SK-N-SH (cell line): ENCODE measurements at regions of chr2 and their contacts with region 1.

Region 1: GRCh38 chr2:6773007-6773693 is 92.6 kb downstream of the CMPK2 start:
- DNase-seq: peak; percentile 91
- H3K4me3 ChIP-seq: peak overlapping the region; percentile 27 to 46; a peak in 2 of 4 replicates
- H3K27ac ChIP-seq: no peak overlapping the region
- H3K4me1 ChIP-seq: peaks cover 0 to 9% of the 10 kb centered on the region in 2 experiments; a peak in 1 of 4 replicates
- H3K27me3 ChIP-seq: no peaks in the 10 kb centered on the region
- CTCF ChIP-seq: peak; percentile 100
- EP300 ChIP-seq: no peak
- RAD21 ChIP-seq: peak; percentile 98

Region 2: DNA sequence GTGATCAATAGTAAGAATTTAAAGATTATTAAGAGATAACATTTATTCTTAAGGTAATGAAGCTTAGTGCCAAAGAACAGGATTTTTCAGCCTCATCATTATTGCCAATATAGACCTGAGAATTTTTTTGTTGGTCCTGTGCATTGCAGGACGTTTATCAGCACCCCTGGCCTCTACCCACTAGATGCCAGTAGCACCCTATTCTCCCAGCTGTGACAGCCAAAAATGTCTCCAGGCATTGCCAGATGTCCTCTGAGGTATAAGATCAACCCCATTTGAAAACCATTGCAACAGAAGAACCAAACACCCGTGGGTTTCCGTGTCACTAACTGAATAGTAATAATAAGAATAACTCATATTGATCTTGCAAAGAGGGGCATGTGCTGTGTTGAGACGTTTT is 1780.9 kb before region 1 on chr2:
- CTCF ChIA-PET with region 1: interaction called, 28 read pairs
- POLR2A ChIA-PET with region 1: no interaction called
- DNase-seq: peak; percentile 41
- H3K4me3 ChIP-seq: no peak overlapping the region
- H3K27ac ChIP-seq: no peak overlapping the region
- H3K4me1 ChIP-seq: no peaks in the 10 kb centered on the region; a peak in 1 of 4 replicates
- H3K27me3 ChIP-seq: no peaks in the 10 kb centered on the region
- CTCF ChIP-seq: no peak
- EP300 ChIP-seq: no peak
- RAD21 ChIP-seq: peak; percentile 76

Region 3: DNA sequence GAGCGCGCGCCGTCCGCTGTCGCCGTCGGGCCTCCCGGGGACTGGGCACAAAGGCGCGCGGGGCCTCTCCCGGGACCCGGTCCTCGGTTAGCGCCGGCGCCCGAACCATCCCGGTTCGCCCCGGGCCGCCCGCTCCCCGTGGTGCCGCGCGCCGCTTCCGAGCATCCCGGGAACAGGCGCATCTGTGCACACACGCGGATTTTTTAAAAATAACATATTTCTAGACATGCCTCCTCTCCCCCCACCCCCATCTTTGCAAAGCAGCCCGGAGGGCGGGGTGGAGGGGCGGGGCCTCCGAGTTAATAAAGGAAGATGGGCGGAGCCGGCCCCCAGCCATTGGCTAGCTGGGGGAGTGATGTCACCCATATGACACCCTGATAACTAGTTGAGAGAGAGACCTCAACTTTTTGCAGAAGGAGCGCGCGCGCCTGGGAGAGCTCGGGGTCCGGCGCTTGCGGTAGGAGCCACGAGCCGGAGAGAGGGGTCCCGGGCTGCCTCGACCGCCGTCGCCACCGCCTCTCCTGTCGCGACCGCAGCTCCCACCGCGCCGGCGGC is 1081.1 kb before region 1 on chr2 and contains the start of gene SOX11:
- CTCF ChIA-PET with region 1: interaction called, 11 read pairs
- POLR2A ChIA-PET with region 1: no interaction called
- DNase-seq: peak; percentile 99
- H3K4me3 ChIP-seq: peak within 1 kb of the TSS; percentile 91 to 95
- H3K27ac ChIP-seq: peak within 1 kb of the TSS; percentile 84 to 92
- H3K4me1 ChIP-seq: peaks cover 0 to 7% of the 10 kb centered on the region in 2 experiments; a peak in 2 of 4 replicates
- H3K27me3 ChIP-seq: no peaks in the 10 kb centered on the region
- CTCF ChIP-seq: no peak
- EP300 ChIP-seq: peak in 1 of 2 experiments; percentile 15; a peak in 1 of 4 replicates
- RAD21 ChIP-seq: no peak; the same call in 1 of the 2 replicates
- polyA plus RNA-seq, gene SOX11: 2.9 and 3.4 TPM in 2 replicates

Region 4: GRCh38 chr2:6750411-6751158 is 22.6 kb before region 1 on chr2:
- CTCF ChIA-PET with region 1: interaction called, 39 read pairs
- POLR2A ChIA-PET with region 1: no interaction called
- DNase-seq: peak; percentile 62
- H3K4me3 ChIP-seq: peak overlapping the region in 1 of 2 experiments; percentile 27; a peak in 2 of 4 replicates
- H3K27ac ChIP-seq: no peak overlapping the region; a peak in 1 of 4 replicates
- H3K4me1 ChIP-seq: peaks cover 0 to 24% of the 10 kb centered on the region in 2 experiments; a peak in 2 of 4 replicates
- H3K27me3 ChIP-seq: 0 out of 2 replicates have a peak, but pooled peaks cover 4% of the 10 kb centered on the region
- CTCF ChIP-seq: no peak
- EP300 ChIP-seq: peak in 1 of 2 experiments; percentile 95; a peak in 2 of 4 replicates
- RAD21 ChIP-seq: no peak

Region 5: GRCh38 chr2:6760091-6760490 is 13.1 kb before region 1 on chr2:
- CTCF ChIA-PET with region 1: interaction called, 39 read pairs
- POLR2A ChIA-PET with region 1: interaction called, 3 read pairs
- DNase-seq: no peak
- H3K4me3 ChIP-seq: no peak overlapping the region
- H3K27ac ChIP-seq: no peak overlapping the region
- H3K4me1 ChIP-seq: no peaks in the 10 kb centered on the region
- H3K27me3 ChIP-seq: no peaks in the 10 kb centered on the region
- CTCF ChIP-seq: no peak
- EP300 ChIP-seq: no peak
- RAD21 ChIP-seq: no peak

Region 6: DNA sequence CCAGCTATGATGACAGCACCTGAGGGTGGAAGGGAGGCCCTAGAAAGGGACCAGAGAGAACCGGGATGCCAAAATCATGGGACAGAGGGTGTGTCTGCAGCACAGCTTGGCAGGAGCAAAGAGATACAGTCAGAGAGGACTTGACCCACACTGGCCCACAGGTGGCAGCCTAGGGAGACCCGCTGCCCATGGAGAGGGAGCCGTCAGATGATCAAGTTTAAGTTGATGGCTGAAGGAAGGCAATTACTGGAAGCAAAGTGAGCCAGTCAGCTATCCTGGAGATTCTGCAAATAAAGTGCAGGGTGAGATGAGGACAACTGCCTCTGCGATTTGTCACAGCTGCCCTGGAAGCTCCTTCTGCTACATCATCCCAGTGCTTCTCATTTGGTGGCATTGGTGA is 18.5 kb after region 1 on chr2:
- CTCF ChIA-PET with region 1: interaction called, 10 read pairs
- POLR2A ChIA-PET with region 1: no interaction called
- DNase-seq: no peak
- H3K4me3 ChIP-seq: no peak overlapping the region
- H3K27ac ChIP-seq: no peak overlapping the region
- H3K4me1 ChIP-seq: peaks cover 0 to 7% of the 10 kb centered on the region in 2 experiments; a peak in 1 of 4 replicates
- H3K27me3 ChIP-seq: no peaks in the 10 kb centered on the region
- CTCF ChIP-seq: peak; percentile 21; the same call in 1 of the 2 replicates
- EP300 ChIP-seq: no peak
- RAD21 ChIP-seq: no peak